ENCODE measurements at regions of chr9 and their contacts with region 1.

Region 1: GRCh38 chr9:136849038-136849959 is at the start of gene PHPT1:
- DNase-seq: peak; percentile 99
- H3K4me3 ChIP-seq: peak within 1 kb of the TSS; percentile 89 to 97
- H3K27ac ChIP-seq: peak within 1 kb of the TSS; percentile 84 to 98
- H3K4me1 ChIP-seq: peaks cover 4 to 13% of the 10 kb centered on the region in 2 experiments; a peak in 2 of 4 replicates
- H3K27me3 ChIP-seq: no peaks in the 10 kb centered on the region
- CTCF ChIP-seq: no peak
- EP300 ChIP-seq: no peak
- RAD21 ChIP-seq: no peak
- polyA plus RNA-seq, gene PHPT1: 338 and 517 TPM in 2 replicates

Region 2: DNA sequence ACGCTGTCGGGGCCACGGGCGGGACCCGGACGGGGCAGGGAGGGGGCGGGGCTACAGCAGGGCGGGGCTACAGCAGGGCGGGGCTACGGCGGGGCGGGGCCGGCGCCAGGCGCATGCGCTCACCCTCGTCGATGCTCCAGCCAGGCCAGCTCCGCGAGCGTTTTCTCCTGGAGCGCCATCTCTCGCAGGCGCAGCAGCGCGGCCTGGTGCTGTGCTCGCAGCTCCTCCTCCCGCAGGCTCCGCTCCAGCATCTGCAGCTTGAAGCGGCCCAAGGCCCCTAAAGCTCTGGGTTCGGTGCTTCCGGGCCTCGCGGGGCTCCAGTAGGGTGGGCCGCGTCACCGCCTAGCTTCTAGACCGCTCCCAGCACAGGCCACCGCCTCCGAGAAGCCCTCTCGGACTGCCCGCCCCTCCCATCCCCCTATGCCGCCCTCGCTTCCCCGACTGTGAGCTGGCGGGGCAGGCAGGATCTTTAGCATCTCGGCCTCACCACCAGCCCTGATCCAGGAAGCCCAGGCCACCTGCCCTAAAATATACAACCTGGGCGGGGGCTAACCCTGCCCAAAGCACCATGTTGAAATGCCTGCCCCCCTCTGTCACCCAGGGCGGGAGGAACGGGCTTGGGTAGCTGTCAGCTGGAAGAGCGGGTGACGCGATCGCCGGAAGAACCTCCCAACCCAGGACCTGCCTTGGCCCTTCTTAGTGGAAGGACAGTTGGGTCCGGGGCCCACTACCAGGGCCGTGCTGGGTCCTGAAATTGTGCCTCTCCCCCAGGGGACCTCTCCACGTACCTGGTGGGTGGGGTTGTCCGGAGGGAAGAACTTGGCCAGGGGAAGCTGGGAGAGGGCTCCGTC is 581.8 kb before region 1 on chr9:
- CTCF ChIA-PET with region 1: no interaction called
- POLR2A ChIA-PET with region 1: no interaction called
- DNase-seq: peak; percentile 100
- H3K4me3 ChIP-seq: peak overlapping the region; percentile 50 to 52
- H3K27ac ChIP-seq: peak overlapping the region in 1 of 2 experiments; percentile 76; a peak in 2 of 4 replicates
- H3K4me1 ChIP-seq: peaks cover 0 to 15% of the 10 kb centered on the region in 2 experiments; a peak in 1 of 4 replicates
- H3K27me3 ChIP-seq: peaks cover 5% of the 10 kb centered on the region; the same call in 1 of the 2 replicates
- CTCF ChIP-seq: peak; percentile 28; the same call in 1 of the 2 replicates
- EP300 ChIP-seq: no peak
- RAD21 ChIP-seq: peak; percentile 49

Region 3: DNA sequence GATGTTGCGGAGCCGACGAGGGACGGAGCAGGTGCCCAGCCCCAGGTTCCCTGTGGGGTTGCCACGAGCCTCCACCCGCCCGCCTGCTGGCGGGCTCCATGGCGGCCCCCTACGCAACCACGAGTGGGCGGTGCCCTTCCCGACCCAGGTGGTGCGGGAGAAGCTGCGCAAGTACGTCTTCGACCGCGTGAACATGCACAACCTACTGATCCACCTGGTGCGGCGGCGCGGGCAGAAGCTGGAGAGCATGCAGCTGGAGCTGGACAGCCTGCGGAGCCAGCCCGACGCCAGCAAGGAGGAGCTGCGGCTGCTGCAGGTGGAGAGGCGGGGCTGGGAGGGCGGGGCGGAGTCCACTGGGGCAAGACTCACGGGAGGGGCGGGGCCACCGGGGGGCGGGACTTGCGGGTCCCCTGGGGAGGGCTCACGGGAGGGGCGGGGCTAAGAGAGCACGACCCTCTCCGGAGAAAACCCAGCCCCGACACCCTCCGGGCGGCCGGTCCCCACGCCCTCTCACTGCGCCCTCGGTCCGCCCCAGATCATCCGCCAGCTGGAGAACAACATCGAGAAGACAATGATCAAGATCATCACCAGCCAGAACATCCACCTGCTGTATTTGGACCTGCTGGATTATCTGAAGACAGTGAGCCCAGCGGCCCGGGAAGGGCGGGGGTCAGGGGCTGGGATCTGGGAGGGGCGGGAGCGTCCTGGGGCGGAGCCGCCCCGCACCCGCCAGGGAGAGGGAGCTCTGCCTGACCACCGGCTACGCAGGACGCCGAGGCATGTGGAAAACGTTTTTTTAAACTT is 49.2 kb before region 1 on chr9:
- CTCF ChIA-PET with region 1: interaction called, 36 read pairs
- POLR2A ChIA-PET with region 1: interaction called, 3 read pairs
- DNase-seq: peak; percentile 97
- H3K4me3 ChIP-seq: peak overlapping the region; percentile 51 to 66
- H3K27ac ChIP-seq: peak overlapping the region in 1 of 2 experiments; percentile 54; a peak in 2 of 4 replicates
- H3K4me1 ChIP-seq: peaks cover 5 to 40% of the 10 kb centered on the region in 2 experiments; a peak in 2 of 4 replicates
- H3K27me3 ChIP-seq: no peaks in the 10 kb centered on the region
- CTCF ChIP-seq: no peak
- EP300 ChIP-seq: no peak
- RAD21 ChIP-seq: no peak

Region 4: DNA sequence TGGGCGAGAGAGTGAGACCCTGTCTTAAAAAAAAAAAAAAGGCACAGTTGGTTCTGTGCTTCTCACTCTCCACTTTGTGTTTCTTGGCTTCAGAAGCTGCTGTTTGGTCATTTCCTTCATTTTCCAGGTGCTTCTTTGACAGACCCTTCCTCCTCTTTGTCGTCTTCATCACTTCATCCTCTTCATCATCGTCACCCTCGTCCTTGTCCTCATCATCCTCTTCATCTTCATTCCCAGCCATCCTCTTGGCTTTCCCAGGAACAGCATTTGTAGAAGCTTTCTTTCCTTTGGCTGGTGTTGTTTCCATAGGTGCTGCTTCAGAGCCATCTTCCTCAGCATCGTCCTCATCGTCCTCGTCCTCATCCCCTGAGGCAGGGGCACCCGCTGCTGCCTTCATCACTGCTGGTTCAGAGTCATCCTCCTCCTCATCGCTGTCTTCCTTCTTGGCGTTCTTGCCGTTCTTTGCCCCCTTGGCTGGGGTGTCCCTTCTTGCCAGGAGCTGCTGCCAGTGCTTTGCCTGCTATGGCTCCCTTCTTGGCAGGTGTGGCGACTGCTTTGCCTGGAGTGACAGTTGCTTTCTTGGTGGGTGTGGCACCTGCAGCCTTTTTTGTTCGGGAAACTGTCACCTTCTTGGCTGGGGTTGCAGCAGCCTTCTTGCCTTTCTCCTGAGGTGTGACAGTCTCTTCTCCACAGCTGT is 34.4 kb before region 1 on chr9:
- CTCF ChIA-PET with region 1: interaction called, 24 read pairs
- POLR2A ChIA-PET with region 1: no interaction called
- DNase-seq: no peak
- H3K4me3 ChIP-seq: no peak overlapping the region
- H3K27ac ChIP-seq: no peak overlapping the region
- H3K4me1 ChIP-seq: peaks cover 3 to 12% of the 10 kb centered on the region in 2 experiments; a peak in 3 of 4 replicates
- H3K27me3 ChIP-seq: no peaks in the 10 kb centered on the region
- CTCF ChIP-seq: no peak
- EP300 ChIP-seq: no peak
- RAD21 ChIP-seq: no peak

Region 5: GRCh38 chr9:136823136-136824046 is 25.9 kb before region 1 on chr9:
- CTCF ChIA-PET with region 1: interaction called, 17 read pairs
- POLR2A ChIA-PET with region 1: no interaction called
- DNase-seq: no peak
- H3K4me3 ChIP-seq: no peak overlapping the region
- H3K27ac ChIP-seq: no peak overlapping the region
- H3K4me1 ChIP-seq: no peaks in the 10 kb centered on the region
- H3K27me3 ChIP-seq: no peaks in the 10 kb centered on the region
- CTCF ChIP-seq: no peak
- EP300 ChIP-seq: no peak
- RAD21 ChIP-seq: no peak

Region 6: DNA sequence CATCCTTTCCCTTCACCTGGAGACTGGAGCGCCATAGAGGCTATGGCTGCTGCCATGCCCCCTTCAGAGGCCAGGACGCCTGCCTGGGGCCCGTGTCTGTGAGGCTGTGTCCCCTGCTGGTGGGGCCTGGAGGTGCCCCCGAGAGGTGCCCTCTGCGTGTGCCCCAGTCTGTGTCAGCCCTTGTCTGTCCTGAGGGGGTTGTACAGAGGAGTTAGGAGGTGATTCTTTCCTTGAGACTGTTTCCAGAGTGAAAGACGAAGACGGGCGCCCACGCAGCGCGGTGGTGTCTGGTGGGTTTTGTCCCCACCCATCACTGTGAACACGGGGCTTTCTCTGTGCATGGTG is 61.6 kb after region 1 on chr9:
- CTCF ChIA-PET with region 1: no interaction called
- POLR2A ChIA-PET with region 1: no interaction called
- DNase-seq: no peak
- H3K4me3 ChIP-seq: no peak overlapping the region
- H3K27ac ChIP-seq: no peak overlapping the region
- H3K4me1 ChIP-seq: no peaks in the 10 kb centered on the region
- H3K27me3 ChIP-seq: no peaks in the 10 kb centered on the region
- CTCF ChIP-seq: no peak
- EP300 ChIP-seq: no peak
- RAD21 ChIP-seq: no peak

Region 7: GRCh38 chr9:137000177-137000883 is 151.0 kb after region 1 on chr9:
- CTCF ChIA-PET with region 1: no interaction called
- POLR2A ChIA-PET with region 1: no interaction called
- DNase-seq: no peak
- H3K4me3 ChIP-seq: no peak overlapping the region
- H3K27ac ChIP-seq: no peak overlapping the region
- H3K4me1 ChIP-seq: peaks cover 9 to 13% of the 10 kb centered on the region in 2 experiments; a peak in 3 of 4 replicates
- H3K27me3 ChIP-seq: no peaks in the 10 kb centered on the region
- CTCF ChIP-seq: no peak
- EP300 ChIP-seq: no peak
- RAD21 ChIP-seq: no peak